ENCODE measurements at regions of chr15 and their contacts with region 1.

Region 1: GRCh38 chr15:91249591-91249990 is 149.5 kb downstream of the SV2B start:
- DNase-seq: no peak
- ATAC-seq: no peak
- H3K4me3 ChIP-seq: no peak overlapping the region
- H3K27ac ChIP-seq: no peak overlapping the region
- H3K4me1 ChIP-seq: no peaks in the 10 kb centered on the region
- H3K27me3 ChIP-seq: peaks cover 32% of the 10 kb centered on the region
- CTCF ChIP-seq: no peak

Region 2: GRCh38 chr15:91271565-91272153 is 22.1 kb after region 1 on chr15:
- CTCF ChIA-PET with region 1: interaction called, 3 read pairs
- POLR2A ChIA-PET with region 1: no interaction called
- intact Hi-C with region 1: loop called (anchors 2 kb)
- DNase-seq: peak; percentile 82
- ATAC-seq: peak; percentile 59
- H3K4me3 ChIP-seq: no peak overlapping the region
- H3K27ac ChIP-seq: no peak overlapping the region
- H3K4me1 ChIP-seq: no peaks in the 10 kb centered on the region
- H3K27me3 ChIP-seq: peaks cover 18% of the 10 kb centered on the region; the same call in 1 of the 2 replicates
- CTCF ChIP-seq: peak; percentile 88

Region 3: GRCh38 chr15:91456251-91456738 is 206.7 kb after region 1 on chr15:
- CTCF ChIA-PET with region 1: no interaction called
- POLR2A ChIA-PET with region 1: no interaction called
- intact Hi-C with region 1: no loop called
- DNase-seq: peak; percentile 89
- ATAC-seq: no peak; the same call in 1 of the 2 replicates
- H3K4me3 ChIP-seq: peak overlapping the region; percentile 7; the same call in 1 of the 2 replicates
- H3K27ac ChIP-seq: peak overlapping the region; percentile 98
- H3K4me1 ChIP-seq: peaks cover 22% of the 10 kb centered on the region
- H3K27me3 ChIP-seq: no peaks in the 10 kb centered on the region
- CTCF ChIP-seq: no peak